Lower leg skin (tissue), 4 donors: ENCODE measurements at regions of chr5 and their contacts with region 1.

Region 1: DNA sequence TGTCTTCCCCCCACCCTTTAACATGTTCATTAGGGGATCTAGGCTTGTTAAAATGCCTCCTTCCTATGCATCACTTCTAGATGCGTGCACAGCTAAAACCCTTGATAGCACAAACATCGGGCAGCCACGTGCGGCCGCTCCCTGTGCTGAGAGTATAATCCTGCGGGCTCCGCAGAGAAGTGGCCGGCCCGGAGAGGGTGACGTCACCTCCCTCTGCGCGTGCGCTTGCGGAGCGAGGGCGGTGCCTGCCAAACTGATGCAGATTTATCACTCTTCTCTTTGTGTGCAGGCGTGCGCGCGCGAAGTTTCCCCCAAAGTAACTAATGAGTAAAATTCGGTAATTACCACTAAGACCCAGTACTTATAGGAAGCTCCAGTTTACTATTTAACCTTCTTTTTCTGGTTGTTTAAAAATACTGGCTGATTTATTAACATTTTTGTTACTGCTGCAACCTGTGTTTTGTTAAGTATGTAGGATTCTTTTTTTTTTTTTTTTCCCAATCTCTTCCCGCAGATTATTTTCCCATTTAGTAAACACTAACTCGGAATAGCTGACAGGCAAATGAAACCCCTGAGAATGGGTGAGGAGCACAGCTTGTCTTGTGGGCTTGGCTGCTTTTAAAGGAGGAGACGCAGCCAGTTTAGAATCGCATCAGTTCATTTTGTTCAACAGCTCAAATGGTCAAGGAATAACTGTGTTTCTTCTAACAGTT is 121.6 kb downstream of the TRIO start:
- DNase-seq: peak; percentile 91 to 98
- H3K4me3 ChIP-seq: no peak overlapping the region
- CTCF ChIP-seq: no peak
- POLR2A ChIP-seq: no peak

Region 2: GRCh38 chr5:14153932-14154731 is 110.6 kb before region 1 on chr5:
- intact Hi-C with region 1: loop called (anchors 5 kb)
- DNase-seq: peak; percentile 71 to 92
- H3K4me3 ChIP-seq: no peak overlapping the region
- CTCF ChIP-seq: no peak
- POLR2A ChIP-seq: no peak

Region 3: GRCh38 chr5:14615344-14615743 is 350.6 kb after region 1 on chr5:
- intact Hi-C with region 1: no loop called
- DNase-seq: no peak
- H3K4me3 ChIP-seq: no peak overlapping the region
- CTCF ChIP-seq: no peak
- POLR2A ChIP-seq: no peak

Region 4: GRCh38 chr5:14757850-14758249 is 493.1 kb after region 1 on chr5:
- intact Hi-C with region 1: no loop called
- DNase-seq: no peak
- H3K4me3 ChIP-seq: no peak overlapping the region
- CTCF ChIP-seq: no peak
- POLR2A ChIP-seq: no peak